ENCODE measurements at regions of chr18 and their contacts with region 1.

Region 1: DNA sequence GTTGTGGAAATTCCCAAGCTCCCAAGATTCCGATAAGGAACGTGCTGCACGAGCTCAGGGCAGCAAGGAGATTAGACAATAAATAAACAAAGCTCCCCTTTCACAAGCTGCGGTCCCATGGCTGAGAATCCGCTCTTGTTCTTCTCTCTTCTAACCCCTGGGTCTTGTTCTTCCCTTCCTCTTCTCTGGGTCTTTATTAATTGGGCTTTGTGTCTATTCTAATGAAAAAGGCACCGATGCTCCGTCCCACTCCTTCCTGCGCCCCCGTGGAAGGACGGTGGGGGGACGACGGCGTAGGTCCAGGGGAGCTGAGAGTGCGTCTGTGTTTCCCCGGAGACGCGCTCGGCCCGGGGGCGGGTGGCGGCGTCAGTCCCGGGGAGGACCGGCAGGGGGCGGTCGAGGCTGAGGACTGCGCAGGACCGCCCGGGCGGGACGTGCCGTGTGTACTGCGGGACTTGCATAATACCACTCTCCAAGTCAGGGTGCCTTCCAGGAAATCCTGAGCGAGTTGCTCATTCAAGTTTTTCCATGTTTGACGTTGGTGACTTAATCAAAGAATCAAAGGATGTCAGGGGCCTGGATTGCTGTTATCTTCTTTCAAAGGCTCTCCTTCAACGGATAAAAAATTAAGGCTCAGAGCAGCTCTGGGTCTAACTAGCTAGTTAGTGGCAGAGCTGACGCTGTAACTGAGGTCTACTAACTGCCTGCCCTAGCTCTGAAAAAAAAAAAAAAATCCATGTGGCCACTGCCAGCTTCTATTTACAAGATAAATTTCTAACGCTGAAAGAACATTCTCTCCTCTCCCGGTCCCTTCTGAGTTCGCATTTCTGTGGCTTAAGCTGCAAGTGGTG is 321.4 kb downstream of the TGIF1 start:
- DNase-seq: peak; percentile 92
- ATAC-seq: peak; percentile 99
- H3K4me3 Mint-ChIP-seq: peak overlapping the region; percentile 31
- H3K27ac Mint-ChIP-seq: peak overlapping the region; percentile 28
- H3K4me1 Mint-ChIP-seq: peaks cover 4% of the 10 kb centered on the region
- H3K27me3 Mint-ChIP-seq: peaks cover 16% of the 10 kb centered on the region

Region 2: DNA sequence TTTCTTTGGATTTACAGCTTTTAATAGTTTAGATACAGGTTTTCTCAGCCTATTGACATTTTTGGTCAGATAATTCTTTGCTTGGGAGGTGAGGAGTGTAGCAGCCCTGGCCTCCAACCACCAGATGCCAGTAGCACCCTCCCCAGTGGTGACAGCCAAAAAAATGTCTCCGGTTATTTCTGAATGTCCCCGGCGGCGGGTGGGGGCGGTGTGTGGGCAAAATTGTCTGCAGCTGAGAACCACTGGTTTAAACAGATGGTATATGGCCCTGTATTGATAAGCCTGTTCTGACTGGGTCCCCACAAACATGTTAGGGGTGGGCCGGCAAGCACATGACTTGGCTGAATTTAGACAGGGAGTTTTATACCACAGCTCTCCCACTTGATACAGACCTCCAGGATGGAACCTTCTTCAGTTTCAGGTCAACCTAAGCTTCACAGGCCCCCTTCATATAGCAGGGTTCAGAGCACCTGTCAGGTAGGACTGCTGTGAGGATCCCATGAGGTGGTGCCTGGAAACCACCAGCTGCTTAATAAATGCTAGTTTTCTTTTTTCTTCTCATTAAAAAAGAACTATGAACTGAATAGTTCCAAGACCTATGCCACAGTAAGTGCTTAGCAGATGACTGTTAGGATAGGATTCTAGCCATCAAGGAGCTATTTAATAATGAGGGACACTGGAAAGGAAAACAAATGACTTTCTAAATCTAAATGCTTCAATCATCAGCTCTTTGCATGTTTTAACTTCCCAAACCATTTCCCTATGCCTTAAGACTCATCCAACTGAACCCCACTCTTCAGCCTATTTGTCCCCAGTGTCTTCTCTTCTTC is 776.5 kb before region 1 on chr18:
- CTCF ChIA-PET with region 1: no interaction called
- POLR2A ChIA-PET with region 1: no interaction called
- intact Hi-C with region 1: no loop called
- DNase-seq: peak; percentile 85
- ATAC-seq: peak; percentile 38
- H3K4me3 Mint-ChIP-seq: no peak overlapping the region
- H3K27ac Mint-ChIP-seq: peak overlapping the region; percentile 80
- H3K4me1 Mint-ChIP-seq: peaks cover 90% of the 10 kb centered on the region
- H3K27me3 Mint-ChIP-seq: no peaks in the 10 kb centered on the region

Region 3: GRCh38 chr18:3782901-3783300 is 11.6 kb after region 1 on chr18:
- CTCF ChIA-PET with region 1: interaction called, 19 read pairs
- POLR2A ChIA-PET with region 1: no interaction called
- intact Hi-C with region 1: no loop called
- DNase-seq: no peak
- ATAC-seq: no peak
- H3K4me3 Mint-ChIP-seq: no peak overlapping the region
- H3K27ac Mint-ChIP-seq: no peak overlapping the region
- H3K4me1 Mint-ChIP-seq: no peaks in the 10 kb centered on the region
- H3K27me3 Mint-ChIP-seq: peaks cover 2% of the 10 kb centered on the region

Region 4: DNA sequence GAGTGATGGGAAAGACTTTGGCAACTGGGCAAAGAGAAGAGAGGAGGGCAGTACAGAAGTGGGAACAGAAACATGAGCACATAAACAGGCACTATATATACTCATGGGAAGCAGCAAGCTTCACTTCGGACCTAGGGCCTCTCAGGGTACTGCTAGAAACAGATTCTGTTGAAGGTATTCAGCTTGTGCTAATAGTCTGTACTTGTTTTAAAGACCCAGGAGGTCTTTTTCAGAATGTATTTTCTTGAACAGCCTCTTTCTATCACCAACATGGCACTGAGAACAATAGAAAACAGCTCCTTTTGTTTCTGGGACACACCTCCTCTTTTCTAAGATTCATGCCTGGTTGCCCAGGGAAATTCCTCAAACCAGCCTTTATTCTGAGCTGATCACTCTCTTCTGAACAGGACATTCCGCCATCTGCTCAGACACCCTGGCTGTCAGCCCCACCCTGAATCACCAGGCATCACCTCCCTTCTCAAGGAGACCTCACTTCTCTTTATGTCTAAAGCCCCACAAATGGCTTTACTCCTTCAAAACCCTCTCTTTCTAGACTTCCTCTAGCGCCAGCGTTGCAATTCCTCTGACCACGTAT is 68.2 kb after region 1 on chr18:
- CTCF ChIA-PET with region 1: interaction called, 12 read pairs
- POLR2A ChIA-PET with region 1: no interaction called
- intact Hi-C with region 1: no loop called
- DNase-seq: no peak
- ATAC-seq: no peak
- H3K4me3 Mint-ChIP-seq: no peak overlapping the region
- H3K27ac Mint-ChIP-seq: no peak overlapping the region
- H3K4me1 Mint-ChIP-seq: no peaks in the 10 kb centered on the region
- H3K27me3 Mint-ChIP-seq: peaks cover 8% of the 10 kb centered on the region

Region 5: DNA sequence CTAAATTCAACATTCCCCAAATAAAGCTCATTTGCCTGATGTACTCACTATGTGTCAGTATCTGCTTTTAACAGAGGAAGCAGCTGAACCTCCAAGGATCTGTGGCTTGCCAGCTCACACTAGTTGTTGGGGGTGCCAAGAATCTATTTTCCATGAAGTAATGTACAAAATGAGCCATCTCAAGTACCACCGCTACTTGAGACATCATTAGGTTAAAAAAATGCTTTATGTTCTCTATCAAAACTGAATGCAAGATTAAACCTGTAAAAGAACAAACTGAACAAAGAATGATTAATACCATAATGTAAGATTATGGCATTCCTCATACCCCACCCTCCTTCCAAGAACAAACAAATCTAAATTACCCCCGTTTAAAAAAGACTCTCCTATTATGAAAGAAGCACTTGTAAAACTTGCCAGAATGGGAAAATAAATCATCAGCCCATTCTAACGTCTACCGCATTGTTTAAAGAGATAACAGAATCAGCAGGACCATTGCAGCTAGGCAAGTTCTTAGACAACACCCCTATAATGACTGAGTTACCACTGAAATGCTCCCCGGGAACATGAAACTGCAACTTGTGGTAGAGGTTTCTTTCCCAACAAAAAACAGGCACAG is 212.1 kb after region 1 on chr18:
- CTCF ChIA-PET with region 1: interaction called, 12 read pairs
- POLR2A ChIA-PET with region 1: no interaction called
- intact Hi-C with region 1: no loop called
- DNase-seq: no peak
- ATAC-seq: no peak
- H3K4me3 Mint-ChIP-seq: no peak overlapping the region
- H3K27ac Mint-ChIP-seq: no peak overlapping the region
- H3K4me1 Mint-ChIP-seq: peaks cover 18% of the 10 kb centered on the region
- H3K27me3 Mint-ChIP-seq: peaks cover 2% of the 10 kb centered on the region

Region 6: DNA sequence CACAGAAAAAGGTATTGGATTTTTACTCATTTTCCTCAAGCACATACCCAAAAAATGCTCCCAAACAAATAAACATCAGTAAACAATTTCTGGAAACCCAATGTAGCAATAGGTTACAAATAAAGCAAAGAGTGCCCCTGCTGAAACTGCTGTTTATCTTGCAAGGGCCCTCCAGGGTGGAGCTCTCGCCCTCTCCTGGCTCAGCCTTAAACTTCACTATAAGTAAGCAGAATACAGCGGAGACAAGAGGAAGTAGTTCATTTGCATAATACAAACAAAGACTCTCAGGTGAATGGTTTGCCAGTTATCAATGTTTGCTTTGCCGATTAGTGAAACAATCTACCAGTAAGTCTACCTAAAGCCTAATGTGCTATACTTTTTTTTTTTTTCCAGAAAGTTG is 246.1 kb after region 1 on chr18:
- CTCF ChIA-PET with region 1: no interaction called
- POLR2A ChIA-PET with region 1: no interaction called
- intact Hi-C with region 1: no loop called
- DNase-seq: peak; percentile 6
- ATAC-seq: no peak
- H3K4me3 Mint-ChIP-seq: no peak overlapping the region
- H3K27ac Mint-ChIP-seq: no peak overlapping the region
- H3K4me1 Mint-ChIP-seq: no peaks in the 10 kb centered on the region
- H3K27me3 Mint-ChIP-seq: peaks cover 5% of the 10 kb centered on the region

Region 7: DNA sequence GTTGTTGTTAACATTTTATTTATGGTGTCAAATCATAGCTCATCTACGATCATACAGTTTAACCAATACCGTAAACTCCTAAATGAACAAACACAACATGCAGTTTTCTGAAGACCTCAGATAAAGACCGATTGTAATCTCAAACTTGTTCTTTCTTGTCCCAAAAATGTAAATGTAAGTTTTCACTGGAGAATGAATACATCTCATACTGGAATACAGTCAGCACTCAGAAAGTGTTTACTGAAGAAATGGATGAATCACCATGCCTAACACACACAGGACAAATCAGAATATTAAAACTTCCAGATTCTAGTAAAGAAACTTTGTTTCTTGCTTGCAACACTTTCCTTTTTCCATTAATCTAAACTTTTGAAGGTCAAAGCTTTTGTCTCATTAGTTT is 303.3 kb after region 1 on chr18:
- CTCF ChIA-PET with region 1: interaction called, 10 read pairs
- POLR2A ChIA-PET with region 1: no interaction called
- intact Hi-C with region 1: loop called in 1 of 2 experiments (anchors 1 kb)
- DNase-seq: no peak
- ATAC-seq: no peak
- H3K4me3 Mint-ChIP-seq: no peak overlapping the region
- H3K27ac Mint-ChIP-seq: no peak overlapping the region
- H3K4me1 Mint-ChIP-seq: no peaks in the 10 kb centered on the region
- H3K27me3 Mint-ChIP-seq: peaks cover 3% of the 10 kb centered on the region

Measured in activated CD4-positive, alpha-beta T cell treated with anti-CD3 and anti-CD28 coated beads for 36 hours (primary cell).